ENCODE measurements at regions of chr17 and their contacts with region 1.

Region 1: GRCh38 chr17:58710936-58711775 is 18.8 kb downstream of the RAD51C start:
- DNase-seq: peak; percentile 72
- H3K4me3 Mint-ChIP-seq: no peak overlapping the region
- H3K27ac Mint-ChIP-seq: no peak overlapping the region
- H3K4me1 Mint-ChIP-seq: no peaks in the 10 kb centered on the region
- H3K27me3 Mint-ChIP-seq: no peaks in the 10 kb centered on the region
- CTCF ChIP-seq: peak; percentile 78

Region 2: DNA sequence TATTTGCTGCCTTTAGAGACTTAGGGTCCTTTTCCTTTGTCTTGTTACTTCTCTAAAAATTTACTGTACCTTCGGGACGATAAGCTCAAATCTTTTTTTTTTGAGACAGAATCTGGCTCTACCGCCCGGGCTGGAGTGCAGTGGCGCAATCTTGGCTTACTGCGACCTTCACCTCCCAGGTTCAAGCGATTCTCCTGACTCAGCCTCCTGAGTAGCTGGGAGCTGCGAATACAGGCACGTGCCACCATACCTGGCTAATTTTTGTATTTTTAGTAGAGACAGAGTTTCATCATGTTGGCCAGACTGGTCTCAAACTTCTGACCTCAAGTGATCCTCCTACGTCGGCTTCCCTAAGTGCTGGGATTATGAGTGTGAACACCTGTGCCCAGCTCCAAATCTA is 11.4 kb before region 1 on chr17:
- CTCF ChIA-PET with region 1: interaction called, 15 read pairs
- POLR2A ChIA-PET with region 1: interaction called, 5 read pairs
- intact Hi-C with region 1: no loop called
- DNase-seq: no peak
- H3K4me3 Mint-ChIP-seq: no peak overlapping the region
- H3K27ac Mint-ChIP-seq: no peak overlapping the region
- H3K4me1 Mint-ChIP-seq: no peaks in the 10 kb centered on the region
- H3K27me3 Mint-ChIP-seq: no peaks in the 10 kb centered on the region
- CTCF ChIP-seq: no peak

Region 3: DNA sequence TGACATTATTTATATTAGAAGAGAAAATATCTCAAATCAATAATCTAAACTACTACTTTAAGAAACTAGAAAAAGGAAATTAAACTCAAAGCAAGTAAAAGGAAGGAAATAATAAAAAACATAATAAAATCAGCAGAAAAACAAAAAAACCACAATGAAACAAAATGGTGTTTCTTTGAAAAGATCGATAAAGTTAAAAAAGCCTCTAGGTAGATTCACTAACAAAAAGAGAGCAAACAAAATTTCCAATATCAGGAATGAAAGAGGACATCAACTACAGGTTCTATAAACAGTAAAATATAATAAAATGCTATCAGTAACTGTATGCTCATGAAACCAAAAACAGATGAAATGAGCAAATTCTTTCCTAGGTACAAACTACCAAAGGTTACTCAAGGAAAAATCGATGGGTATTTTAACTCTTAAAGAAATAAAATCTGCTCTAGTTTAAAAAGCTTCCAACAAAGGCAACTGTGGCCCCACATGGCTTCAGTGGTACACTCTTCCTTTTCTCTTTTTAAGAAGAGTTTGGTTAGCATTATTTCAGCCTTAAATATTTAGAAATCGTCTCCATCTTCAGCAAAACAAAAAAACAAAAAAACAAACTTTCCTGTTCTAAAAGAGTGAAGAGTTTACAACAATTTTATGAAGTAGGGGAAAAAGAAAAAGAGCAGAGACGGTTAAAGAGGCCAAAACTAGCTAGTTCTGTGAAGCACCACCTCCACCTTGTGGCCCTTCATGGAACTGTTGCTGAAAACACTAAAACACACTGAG is 293.4 kb after region 1 on chr17:
- CTCF ChIA-PET with region 1: interaction called, 73 read pairs
- POLR2A ChIA-PET with region 1: interaction called, 19 read pairs
- intact Hi-C with region 1: loop called (anchors 1 kb)
- DNase-seq: peak; percentile 75
- H3K4me3 Mint-ChIP-seq: no peak overlapping the region
- H3K27ac Mint-ChIP-seq: peak overlapping the region; percentile 19
- H3K4me1 Mint-ChIP-seq: no peaks in the 10 kb centered on the region
- H3K27me3 Mint-ChIP-seq: no peaks in the 10 kb centered on the region
- CTCF ChIP-seq: peak; percentile 95

Region 4: DNA sequence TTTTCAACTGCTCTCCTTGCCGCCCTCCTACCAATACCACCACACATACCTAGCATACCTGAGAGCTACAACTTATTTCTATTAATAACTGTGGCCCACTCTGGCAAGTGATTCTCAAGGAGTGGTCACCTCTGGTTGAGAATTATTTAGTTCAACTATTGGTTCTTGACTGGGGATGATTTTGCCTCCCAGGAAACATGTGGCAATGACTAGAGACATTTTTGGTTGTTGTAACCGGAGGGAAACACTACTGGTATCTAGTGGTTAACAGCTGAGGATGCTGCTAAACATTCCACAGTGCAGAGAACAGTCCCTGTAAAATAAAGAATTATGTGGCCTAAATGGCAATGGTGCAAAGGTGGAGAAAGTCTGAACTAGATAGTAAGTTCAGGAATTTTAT is 298.9 kb after region 1 on chr17:
- CTCF ChIA-PET with region 1: interaction called, 73 read pairs
- POLR2A ChIA-PET with region 1: interaction called, 19 read pairs
- intact Hi-C with region 1: loop called (anchors 1 kb)
- DNase-seq: no peak
- H3K4me3 Mint-ChIP-seq: no peak overlapping the region
- H3K27ac Mint-ChIP-seq: no peak overlapping the region
- H3K4me1 Mint-ChIP-seq: no peaks in the 10 kb centered on the region
- H3K27me3 Mint-ChIP-seq: no peaks in the 10 kb centered on the region
- CTCF ChIP-seq: no peak